ENCODE measurements at regions of chr9 and their contacts with region 1.

Region 1: GRCh38 chr9:33721674-33722358 is 73.5 kb upstream of the PRSS3 start:
- DNase-seq: peak; percentile 74
- ATAC-seq: peak; percentile 91
- H3K4me3 ChIP-seq: no peak overlapping the region
- H3K27ac ChIP-seq: no peak overlapping the region
- H3K4me1 ChIP-seq: no peaks in the 10 kb centered on the region
- H3K27me3 ChIP-seq: peaks cover 11% of the 10 kb centered on the region
- CTCF ChIP-seq: peak; percentile 100
- POLR2A ChIP-seq: 0 out of 2 replicates have a peak, but pooled peaks have one; percentile 40
- RAD21 ChIP-seq: peak; percentile 99

Region 2: GRCh38 chr9:33404788-33405362 is 316.9 kb before region 1 on chr9:
- CTCF ChIA-PET with region 1: interaction called, 3 read pairs
- POLR2A ChIA-PET with region 1: no interaction called
- dilution Hi-C with region 1: no loop called
- in situ Hi-C with region 1: loop called (anchors 25 kb)
- intact Hi-C with region 1: loop called (anchors 10 kb)
- DNase-seq: no peak
- ATAC-seq: peak; percentile 27; the same call in 1 of the 2 replicates
- H3K4me3 ChIP-seq: no peak overlapping the region
- H3K27ac ChIP-seq: no peak overlapping the region
- H3K4me1 ChIP-seq: no peaks in the 10 kb centered on the region
- H3K27me3 ChIP-seq: peaks cover 3% of the 10 kb centered on the region; the same call in 1 of the 2 replicates
- CTCF ChIP-seq: no peak
- POLR2A ChIP-seq: no peak
- RAD21 ChIP-seq: no peak

Region 3: GRCh38 chr9:33415501-33416038 is 306.2 kb before region 1 on chr9:
- CTCF ChIA-PET with region 1: no interaction called
- POLR2A ChIA-PET with region 1: no interaction called
- dilution Hi-C with region 1: no loop called
- in situ Hi-C with region 1: loop called (anchors 25 kb)
- intact Hi-C with region 1: no loop called
- DNase-seq: peak; percentile 22
- ATAC-seq: peak; percentile 91
- H3K4me3 ChIP-seq: no peak overlapping the region
- H3K27ac ChIP-seq: no peak overlapping the region
- H3K4me1 ChIP-seq: no peaks in the 10 kb centered on the region
- H3K27me3 ChIP-seq: peaks cover 16% of the 10 kb centered on the region
- CTCF ChIP-seq: peak; percentile 67
- POLR2A ChIP-seq: no peak
- RAD21 ChIP-seq: peak; percentile 58

Region 4: DNA sequence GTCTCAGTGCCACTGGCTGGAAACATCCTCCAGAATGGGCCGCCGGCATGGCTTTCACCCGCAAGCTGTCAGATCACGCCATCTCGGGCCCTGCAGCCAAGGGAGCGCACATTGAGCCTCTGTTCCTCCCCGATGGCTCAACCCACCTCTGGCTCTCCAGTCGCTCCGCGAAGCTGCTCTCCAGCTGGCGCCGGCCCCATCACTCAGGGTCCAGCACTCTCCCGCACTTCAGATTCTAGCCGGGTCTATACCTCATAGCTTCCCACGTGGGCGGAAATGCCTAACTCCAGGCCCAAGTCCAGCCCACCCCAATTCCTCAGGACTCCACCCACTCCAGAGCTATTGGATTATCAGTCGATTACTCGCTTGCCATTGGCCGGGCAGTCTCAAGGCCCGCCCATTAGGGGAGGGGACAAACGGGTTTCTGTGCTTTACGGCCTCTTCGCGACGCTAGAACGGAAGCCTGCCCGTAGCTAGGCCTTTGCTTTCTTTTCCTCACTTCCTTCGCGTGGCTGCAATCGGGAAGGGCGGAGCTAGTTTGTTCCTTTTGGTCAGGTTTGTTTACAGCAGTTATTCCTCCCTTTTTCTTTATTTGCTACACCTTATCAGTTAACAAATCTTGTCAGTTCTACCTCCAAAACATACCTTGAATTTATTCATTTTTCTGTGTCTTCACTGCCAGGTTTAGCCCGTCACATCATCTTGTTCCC is 248.0 kb before region 1 on chr9 and contains the start of gene NOL6:
- CTCF ChIA-PET with region 1: no interaction called
- POLR2A ChIA-PET with region 1: no interaction called
- dilution Hi-C with region 1: no loop called
- in situ Hi-C with region 1: no loop called
- intact Hi-C with region 1: loop called (anchors 1 kb)
- DNase-seq: peak; percentile 99
- ATAC-seq: peak; percentile 99
- H3K4me3 ChIP-seq: peak within 1 kb of the TSS; percentile 57
- H3K27ac ChIP-seq: peak within 1 kb of the TSS; percentile 57
- H3K4me1 ChIP-seq: peaks cover 3% of the 10 kb centered on the region; the same call in 1 of the 2 replicates
- H3K27me3 ChIP-seq: no peaks in the 10 kb centered on the region
- CTCF ChIP-seq: no peak
- POLR2A ChIP-seq: peak; percentile 95
- RAD21 ChIP-seq: no peak
- total RNA-seq, gene NOL6: 42.8 and 47.3 TPM in 2 replicates

Region 5: GRCh38 chr9:33524306-33524947 is 197.4 kb before region 1 on chr9:
- CTCF ChIA-PET with region 1: no interaction called
- POLR2A ChIA-PET with region 1: no interaction called
- dilution Hi-C with region 1: no loop called
- in situ Hi-C with region 1: no loop called
- intact Hi-C with region 1: loop called (anchors 5 kb)
- DNase-seq: no peak
- ATAC-seq: peak; percentile 46
- H3K4me3 ChIP-seq: peak overlapping the region; percentile 93
- H3K27ac ChIP-seq: peak overlapping the region; percentile 42; the same call in 1 of the 2 replicates
- H3K4me1 ChIP-seq: no peaks in the 10 kb centered on the region
- H3K27me3 ChIP-seq: no peaks in the 10 kb centered on the region
- CTCF ChIP-seq: no peak
- POLR2A ChIP-seq: no peak
- RAD21 ChIP-seq: no peak

Region 6: DNA sequence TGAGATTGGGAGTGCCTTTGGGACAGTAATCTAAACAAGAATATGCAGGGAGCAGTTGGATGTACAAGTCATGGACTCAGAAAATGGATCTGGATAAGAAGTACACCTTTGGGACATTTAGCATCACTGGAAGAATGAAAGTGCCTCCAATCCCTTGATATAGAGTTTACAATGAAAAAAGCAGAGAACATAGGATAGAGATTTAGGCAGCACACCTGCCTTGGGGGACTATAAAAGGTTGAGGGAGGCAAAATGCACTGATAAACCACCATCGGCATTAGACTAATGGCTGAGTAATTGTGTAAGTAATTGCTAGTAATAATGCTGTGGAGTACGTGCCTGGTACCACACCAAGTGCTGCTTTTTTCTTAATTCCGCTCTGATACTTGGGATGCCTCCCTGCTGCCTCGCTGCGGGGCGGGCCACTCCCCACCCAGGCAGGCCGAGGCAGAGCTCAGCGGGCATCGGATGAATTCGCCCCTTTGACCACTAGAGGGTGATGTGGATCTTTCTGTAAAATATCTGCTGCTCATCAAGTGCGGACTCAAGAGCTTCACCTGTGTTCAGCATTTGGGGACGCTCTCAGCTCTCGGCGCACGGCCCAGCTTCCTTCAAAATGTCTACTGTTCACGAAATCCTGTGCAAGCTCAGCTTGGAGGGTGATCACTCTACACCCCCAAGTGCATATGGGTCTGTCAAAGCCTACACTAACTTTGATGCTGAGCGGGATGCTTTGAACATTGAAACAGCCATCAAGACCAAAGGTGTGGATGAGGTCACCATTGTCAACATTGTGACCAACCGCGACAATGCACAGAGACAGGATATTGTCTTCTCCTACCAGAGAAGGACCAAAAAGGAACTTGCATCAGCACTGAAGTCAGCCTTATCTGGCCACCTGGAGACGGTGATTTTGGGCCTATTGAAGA is 97.9 kb before region 1 on chr9:
- CTCF ChIA-PET with region 1: interaction called, 35 read pairs
- POLR2A ChIA-PET with region 1: no interaction called
- dilution Hi-C with region 1: no loop called
- in situ Hi-C with region 1: loop called (anchors 5 kb)
- intact Hi-C with region 1: loop called (anchors 1 kb)
- DNase-seq: peak; percentile 67
- ATAC-seq: peak; percentile 78
- H3K4me3 ChIP-seq: no peak overlapping the region
- H3K27ac ChIP-seq: no peak overlapping the region
- H3K4me1 ChIP-seq: peaks cover 8% of the 10 kb centered on the region
- H3K27me3 ChIP-seq: peaks cover 3% of the 10 kb centered on the region
- CTCF ChIP-seq: peak; percentile 90
- POLR2A ChIP-seq: no peak
- RAD21 ChIP-seq: peak; percentile 89

Region 7: DNA sequence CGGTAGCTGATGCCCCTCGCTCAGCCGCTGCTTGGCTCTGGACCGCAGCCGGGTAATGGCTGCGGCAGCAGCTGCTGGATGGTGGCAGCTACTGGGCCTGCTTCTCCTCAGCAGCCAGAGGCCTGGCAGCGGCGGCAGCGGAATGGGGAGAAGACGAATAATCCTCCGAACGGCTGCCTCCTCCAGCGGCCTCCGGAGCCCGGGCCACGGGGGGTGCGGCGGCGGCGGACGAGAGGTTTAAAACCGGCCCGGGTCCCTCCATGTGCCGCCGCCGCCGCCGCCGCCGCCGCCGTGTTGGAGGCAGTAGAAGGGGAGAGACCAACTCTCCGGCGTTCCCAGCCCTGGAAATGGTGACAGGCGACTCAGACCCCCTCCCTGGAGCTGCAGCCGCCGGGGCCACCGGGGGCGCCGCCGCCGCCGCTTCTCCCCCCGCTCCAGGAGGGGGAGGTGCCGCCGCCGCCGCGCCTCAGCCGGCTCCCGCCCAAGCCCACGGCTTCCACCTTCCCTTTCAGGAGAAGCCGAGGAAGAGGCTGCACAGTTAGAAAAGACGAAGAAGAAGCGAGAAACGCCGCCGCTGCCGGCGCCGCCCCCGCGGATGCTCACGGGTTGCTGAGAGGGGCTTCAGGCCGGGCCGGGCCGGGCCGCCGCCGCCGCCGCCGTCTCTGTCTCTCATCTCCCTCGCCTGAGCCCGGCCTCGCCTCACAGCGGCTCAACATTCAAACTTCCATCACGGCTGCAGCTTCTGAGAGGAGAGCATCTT is 44.9 kb before region 1 on chr9:
- CTCF ChIA-PET with region 1: no interaction called
- POLR2A ChIA-PET with region 1: no interaction called
- dilution Hi-C with region 1: no loop called
- in situ Hi-C with region 1: no loop called
- intact Hi-C with region 1: loop called (anchors 5 kb)
- DNase-seq: peak; percentile 13
- ATAC-seq: peak; percentile 87
- H3K4me3 ChIP-seq: peak overlapping the region; percentile 49
- H3K27ac ChIP-seq: peak overlapping the region; percentile 30
- H3K4me1 ChIP-seq: no peaks in the 10 kb centered on the region
- H3K27me3 ChIP-seq: peaks cover 4% of the 10 kb centered on the region
- CTCF ChIP-seq: no peak
- POLR2A ChIP-seq: no peak
- RAD21 ChIP-seq: no peak

Measured in IMR-90 (cell line).